Activated CD4-positive, alpha-beta memory T cell treated with anti-CD3 and anti-CD28 coated beads for 36 hours (primary cell): ENCODE measurements at regions of chr11 and their contacts with region 1.

Region 1: GRCh38 chr11:106076919-106077608 is at the start of gene KBTBD3:
- DNase-seq: peak; percentile 99
- H3K4me3 Mint-ChIP-seq: peak within 1 kb of the TSS; percentile 96
- H3K27ac Mint-ChIP-seq: peak within 1 kb of the TSS; percentile 96
- H3K4me1 Mint-ChIP-seq: peaks cover 52% of the 10 kb centered on the region
- H3K27me3 Mint-ChIP-seq: no peaks in the 10 kb centered on the region
- total RNA-seq, gene KBTBD3: 7.0 to 7.7 TPM

Region 2: GRCh38 chr11:106063009-106063408 is 14.1 kb before region 1 on chr11:
- CTCF ChIA-PET with region 1: interaction called, 4 read pairs
- POLR2A ChIA-PET with region 1: interaction called, 6 read pairs
- intact Hi-C with region 1: loop called (anchors 1 kb)
- DNase-seq: no peak
- H3K4me3 Mint-ChIP-seq: no peak overlapping the region
- H3K27ac Mint-ChIP-seq: no peak overlapping the region
- H3K4me1 Mint-ChIP-seq: peaks cover 18% of the 10 kb centered on the region
- H3K27me3 Mint-ChIP-seq: no peaks in the 10 kb centered on the region

Region 3: GRCh38 chr11:106091480-106092123 is 14.5 kb after region 1 on chr11:
- CTCF ChIA-PET with region 1: interaction called, 10 read pairs
- POLR2A ChIA-PET with region 1: interaction called, 4 read pairs
- intact Hi-C with region 1: loop called (anchors 1 kb)
- DNase-seq: peak; percentile 48
- H3K4me3 Mint-ChIP-seq: no peak overlapping the region
- H3K27ac Mint-ChIP-seq: peak overlapping the region; percentile 44
- H3K4me1 Mint-ChIP-seq: peaks cover 44% of the 10 kb centered on the region
- H3K27me3 Mint-ChIP-seq: no peaks in the 10 kb centered on the region

Region 4: DNA sequence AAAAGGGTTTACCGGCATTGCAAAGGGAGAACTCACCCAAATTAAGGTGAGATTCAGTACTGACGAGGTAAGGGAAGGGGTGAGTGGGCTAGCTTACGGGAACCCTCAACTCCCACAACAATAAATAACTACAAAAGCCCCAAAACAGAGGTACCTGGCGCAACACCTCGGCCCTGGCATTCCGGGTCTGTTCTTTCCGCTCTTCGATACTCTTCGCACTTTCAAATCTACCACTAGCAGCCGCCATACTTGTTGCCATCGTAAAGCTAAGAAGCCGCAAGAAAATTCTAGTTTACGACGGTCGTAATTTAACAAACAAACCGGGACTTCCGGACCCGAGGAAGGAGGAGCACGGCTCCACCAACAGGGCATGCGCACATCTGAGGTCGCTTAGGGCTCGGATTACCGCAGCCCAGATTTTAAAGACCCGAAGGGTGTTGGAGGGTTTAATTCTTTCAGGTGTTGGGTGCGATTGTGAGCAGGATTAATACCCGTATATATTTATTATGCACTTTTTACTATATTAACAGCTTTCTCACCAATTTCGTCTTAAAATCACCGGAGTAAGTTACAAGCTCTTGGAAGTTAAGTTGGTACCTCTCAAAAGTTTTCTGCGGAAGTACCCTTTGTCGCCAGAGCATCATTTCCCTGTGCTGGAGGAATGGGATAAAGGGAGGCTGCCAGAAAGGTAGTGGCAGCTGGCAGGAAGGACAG is 1380.7 kb after region 1 on chr11 and contains the start of gene CWF19L2:
- CTCF ChIA-PET with region 1: no interaction called
- POLR2A ChIA-PET with region 1: no interaction called
- intact Hi-C with region 1: loop called (anchors 5 kb)
- DNase-seq: peak; percentile 94
- H3K4me3 Mint-ChIP-seq: peak within 1 kb of the TSS; percentile 89
- H3K27ac Mint-ChIP-seq: peak within 1 kb of the TSS; percentile 77
- H3K4me1 Mint-ChIP-seq: peaks cover 23% of the 10 kb centered on the region
- H3K27me3 Mint-ChIP-seq: no peaks in the 10 kb centered on the region
- total RNA-seq, gene CWF19L2: 14.0 to 14.4 TPM